Mammary epithelial cell (primary cell): ENCODE measurements at regions of chr2 and their contacts with region 1.

Region 1: DNA sequence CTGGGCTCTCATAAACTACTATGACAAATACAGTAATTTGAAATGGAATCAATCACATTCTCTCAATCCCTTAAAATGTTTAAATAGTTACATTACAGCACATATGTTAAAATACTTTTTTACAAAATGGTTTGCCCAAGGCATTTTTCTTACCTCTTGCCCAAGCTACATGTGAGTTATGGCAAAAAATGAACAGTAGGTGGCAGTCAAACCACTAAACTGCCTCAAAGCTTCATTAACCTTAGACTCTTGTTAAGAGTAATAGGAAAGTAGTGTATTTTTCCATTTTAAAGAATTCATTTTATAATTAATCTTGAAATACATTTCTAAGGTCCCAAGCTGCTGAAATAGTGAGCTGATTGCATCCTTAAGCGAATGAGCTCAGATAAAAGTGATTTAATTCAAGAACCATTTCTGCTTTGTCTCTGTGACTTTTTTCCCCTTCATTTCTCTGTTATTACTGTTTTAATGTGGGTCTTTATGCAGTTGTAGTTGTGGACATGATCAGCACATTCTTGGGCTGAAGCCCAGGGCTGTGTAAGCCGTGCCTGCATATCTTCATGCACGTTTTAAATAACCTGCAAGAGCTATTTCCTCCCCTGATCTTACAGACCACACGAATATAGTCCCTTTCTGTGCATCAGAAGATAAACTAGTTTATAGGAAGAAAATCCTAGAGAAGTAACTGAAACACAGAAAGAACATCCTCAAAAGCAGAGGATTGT is 311.8 kb downstream of the LNPK start:
- DNase-seq: peak; percentile 49
- H3K4me3 ChIP-seq: no peak overlapping the region
- H3K27ac ChIP-seq: no peak overlapping the region
- H3K4me1 ChIP-seq: no peaks in the 10 kb centered on the region
- H3K27me3 ChIP-seq: peaks cover 7% of the 10 kb centered on the region
- CTCF ChIP-seq: peak; percentile 69 to 78

Region 2: DNA sequence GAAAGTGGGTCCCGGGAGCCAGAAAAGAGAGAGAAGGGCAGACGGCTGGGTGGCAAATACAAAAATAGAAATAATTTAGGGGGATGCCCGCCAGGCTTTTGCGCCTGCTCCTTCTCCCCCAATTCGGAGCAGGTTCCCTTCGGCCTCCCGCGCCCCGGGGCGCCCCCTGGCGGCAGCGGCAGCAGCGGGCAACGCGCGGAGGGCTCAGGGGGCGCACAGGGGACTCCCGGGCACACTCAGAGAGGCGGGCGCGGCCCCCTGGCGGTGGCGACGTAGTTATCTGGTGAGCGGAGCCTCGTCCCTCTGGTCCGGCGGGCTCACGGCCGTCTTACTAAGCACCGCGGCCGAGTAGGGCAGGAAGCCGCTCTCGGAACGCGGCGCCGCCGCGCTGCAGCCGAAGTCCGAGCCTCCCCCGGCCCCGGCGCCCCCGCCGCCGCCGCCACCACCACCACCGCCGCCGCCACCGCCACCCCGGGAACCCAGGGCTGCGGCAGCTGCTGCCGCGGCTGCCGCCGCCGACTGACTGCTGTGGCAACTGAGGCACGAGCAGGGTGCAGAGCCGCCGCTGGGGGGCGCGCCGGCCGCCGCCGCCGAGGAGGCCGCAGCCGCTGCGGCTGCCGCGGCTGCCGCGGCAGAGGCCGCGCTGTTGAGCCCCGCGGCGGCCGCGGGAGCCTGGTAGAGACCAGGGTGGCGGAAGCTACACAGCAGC is 389.7 kb after region 1 on chr2:
- CTCF ChIA-PET with region 1: no interaction called
- dilution Hi-C with region 1: no loop called
- in situ Hi-C with region 1: loop called (anchors 10 kb)
- intact Hi-C with region 1: loop called (anchors 1 kb)
- DNase-seq: no peak
- H3K4me3 ChIP-seq: no peak overlapping the region
- H3K27ac ChIP-seq: no peak overlapping the region
- H3K4me1 ChIP-seq: peaks cover 6% of the 10 kb centered on the region
- H3K27me3 ChIP-seq: peaks cover 81% of the 10 kb centered on the region
- CTCF ChIP-seq: peak; percentile 24 to 60